Sigmoid colon (tissue), 7 donors: ENCODE measurements at regions of chr17 and their contacts with region 1.

Region 1: DNA sequence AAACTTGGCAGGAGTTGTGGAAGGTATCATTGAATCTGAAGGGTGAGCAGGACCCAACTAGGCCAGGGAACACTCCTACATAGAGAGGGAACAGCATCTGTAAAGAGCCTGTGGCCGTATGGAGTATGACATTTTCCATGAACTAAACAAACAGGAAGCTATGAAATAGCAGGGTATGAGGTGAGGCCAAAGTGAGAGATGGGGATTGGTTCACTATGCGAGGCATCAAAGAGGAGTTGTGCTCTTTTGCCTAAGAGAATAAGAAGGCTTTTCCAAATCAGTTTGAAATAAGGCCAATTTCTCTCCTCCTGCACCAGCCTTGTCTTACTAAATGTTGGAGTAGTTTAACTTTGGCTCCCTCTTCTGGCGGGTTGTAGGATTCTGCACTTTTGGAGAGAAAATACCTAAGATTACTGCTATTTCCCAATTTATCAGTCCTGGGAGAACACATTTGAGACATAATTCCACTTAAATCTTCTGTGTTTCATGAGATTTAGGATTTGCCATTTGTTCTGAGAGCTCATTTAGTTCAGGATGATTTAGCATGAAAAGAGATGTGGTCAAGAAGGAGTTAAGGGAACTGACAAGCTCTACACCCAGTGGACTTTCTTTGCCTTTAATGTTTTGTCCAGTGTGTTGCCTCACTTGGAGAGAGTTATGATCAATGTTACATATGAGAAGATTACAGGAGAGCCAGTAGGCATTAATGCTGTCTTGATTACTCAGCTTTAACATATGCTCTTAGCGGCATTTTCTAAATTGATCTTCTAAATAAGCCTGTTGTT is 55.4 kb downstream of the TNRC6C start:
- DNase-seq: peak; percentile 72
- H3K4me3 ChIP-seq: no peak overlapping the region
- H3K27ac ChIP-seq: no peak overlapping the region
- H3K4me1 ChIP-seq: peaks cover 0 to 5% (median 0%) of the 10 kb centered on the region in 4 donors
- H3K27me3 ChIP-seq: no peaks in the 10 kb centered on the region
- CTCF ChIP-seq: peak; percentile 65 to 78 (median 72)
- EP300 ChIP-seq: no peak
- POLR2A ChIP-seq: no peak

Region 2: DNA sequence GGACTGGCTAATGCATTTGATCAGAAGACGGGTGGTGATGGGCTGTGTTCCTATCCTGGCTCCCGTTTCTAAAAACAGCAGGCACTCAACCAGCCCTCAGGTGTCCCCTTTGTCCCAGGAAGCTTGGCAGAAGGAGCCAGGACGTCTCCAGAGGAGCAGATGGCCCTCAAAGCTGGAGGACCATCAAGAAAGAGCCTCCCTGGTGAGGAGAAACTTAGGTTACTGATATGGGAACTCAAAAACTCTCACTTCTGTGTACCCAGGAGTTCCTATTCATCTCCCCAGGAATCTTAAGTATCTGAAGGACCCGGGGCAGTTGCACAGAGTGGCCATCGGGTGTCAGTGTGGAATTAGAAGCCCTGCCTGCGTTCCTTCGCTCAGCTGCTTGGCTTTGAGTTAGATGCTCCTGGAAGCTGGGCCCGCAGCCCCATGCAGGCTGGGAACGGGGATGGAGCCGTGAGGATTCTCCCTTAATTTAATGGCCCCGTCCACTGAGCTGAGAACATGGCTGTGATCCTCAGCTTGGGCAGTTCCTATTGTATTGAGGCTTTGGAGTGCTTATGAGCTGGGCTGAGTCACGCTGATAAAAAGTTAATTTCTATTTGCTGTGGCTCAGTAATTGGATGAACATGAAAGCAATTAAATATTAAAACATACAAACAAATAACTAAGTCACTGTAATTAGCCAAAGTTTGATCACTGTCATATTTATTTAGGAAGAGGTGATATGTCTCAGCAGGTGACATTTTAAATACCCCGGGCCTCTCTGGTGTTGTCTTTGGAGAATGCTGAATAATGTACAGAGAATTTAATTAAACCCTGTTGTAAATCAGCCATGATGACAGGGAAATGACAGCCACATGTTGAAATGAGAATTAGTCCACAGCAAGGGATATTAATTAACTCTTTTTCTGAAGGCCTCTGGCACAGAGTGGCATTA is 471.1 kb before region 1 on chr17:
- intact Hi-C with region 1: loop called (anchors 1 kb)
- DNase-seq: peak; percentile 93
- H3K4me3 ChIP-seq: no peak overlapping the region
- H3K27ac ChIP-seq: no peak overlapping the region
- H3K4me1 ChIP-seq: peaks cover 0 to 25% (median 10%) of the 10 kb centered on the region in 4 donors
- H3K27me3 ChIP-seq: no peaks in the 10 kb centered on the region
- CTCF ChIP-seq: peak; percentile 90 to 93 (median 92)
- EP300 ChIP-seq: no peak
- POLR2A ChIP-seq: no peak

Region 3: GRCh38 chr17:77881545-77881944 is 132.3 kb before region 1 on chr17:
- intact Hi-C with region 1: loop called (anchors 10 kb)
- DNase-seq: peak; percentile 91
- H3K4me3 ChIP-seq: no peak overlapping the region
- H3K27ac ChIP-seq: peak overlapping the region; percentile 18 to 56 (median 43)
- H3K4me1 ChIP-seq: peaks cover 0 to 24% (median 20%) of the 10 kb centered on the region in 4 donors
- H3K27me3 ChIP-seq: no peaks in the 10 kb centered on the region
- CTCF ChIP-seq: no peak
- EP300 ChIP-seq: no peak
- POLR2A ChIP-seq: no peak

Region 4: GRCh38 chr17:77957857-77958715 is 55.8 kb before region 1 on chr17 and contains the start of gene TNRC6C:
- intact Hi-C with region 1: loop called (anchors 5 kb)
- DNase-seq: peak; percentile 100
- H3K4me3 ChIP-seq: peak within 1 kb of the TSS; percentile 50 to 79 (median 72)
- H3K27ac ChIP-seq: peak within 1 kb of the TSS; percentile 82 to 90 (median 86)
- H3K4me1 ChIP-seq: peaks cover 0 to 46% (median 31%) of the 10 kb centered on the region in 4 donors
- H3K27me3 ChIP-seq: no peaks in the 10 kb centered on the region
- CTCF ChIP-seq: no peak
- EP300 ChIP-seq: no peak
- POLR2A ChIP-seq: peak; percentile 100
- total RNA-seq, gene TNRC6C: 5.8 to 22.1 (median 18.2) TPM

Region 5: DNA sequence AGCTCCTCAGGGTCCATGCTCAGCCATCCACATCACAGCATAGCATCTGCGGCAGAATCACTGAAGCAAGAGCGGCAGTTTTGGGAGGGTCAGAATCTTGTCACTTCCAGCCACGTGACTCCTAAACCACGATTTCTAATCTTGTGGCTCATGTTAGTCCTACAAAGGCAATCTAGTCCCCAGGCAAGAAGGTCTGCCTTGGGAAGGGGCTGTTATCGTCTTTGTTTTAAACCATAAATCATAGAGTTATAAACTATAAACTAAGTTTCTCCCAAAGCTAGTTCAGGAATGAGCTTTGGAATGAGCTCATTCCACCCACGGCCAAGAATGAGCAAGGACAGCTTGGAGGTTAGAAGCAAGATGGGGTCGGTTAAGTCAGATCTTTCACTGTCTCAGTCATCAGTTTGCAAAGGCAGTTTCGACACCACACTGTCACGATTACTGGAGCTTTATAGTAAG is 584.2 kb after region 1 on chr17:
- intact Hi-C with region 1: no loop called
- DNase-seq: no peak
- H3K4me3 ChIP-seq: no peak overlapping the region
- H3K27ac ChIP-seq: peak overlapping the region in 1 of 4 donors; percentile 32
- H3K4me1 ChIP-seq: peaks cover 0 to 36% (median 27%) of the 10 kb centered on the region in 4 donors
- H3K27me3 ChIP-seq: no peaks in the 10 kb centered on the region
- CTCF ChIP-seq: no peak
- EP300 ChIP-seq: no peak
- POLR2A ChIP-seq: no peak